Activated CD4-positive, alpha-beta memory T cell treated with anti-CD3 and anti-CD28 coated beads, Interleukin-2, amount 10 ng/mL, durations not matched to agents 7 days and 5 days (primary cell): ENCODE measurements at regions of chr7 and their contacts with region 1.

Region 1: GRCh38 chr7:39623018-39623731 is at the start of gene RALA:
- DNase-seq: peak; percentile 91
- H3K4me3 Mint-ChIP-seq: peak within 1 kb of the TSS; percentile 90
- H3K27ac Mint-ChIP-seq: peak within 1 kb of the TSS; percentile 88
- H3K4me1 Mint-ChIP-seq: peaks cover 34% of the 10 kb centered on the region
- H3K27me3 Mint-ChIP-seq: no peaks in the 10 kb centered on the region
- total RNA-seq, gene RALA: 27.8 to 29.6 TPM

Region 2: DNA sequence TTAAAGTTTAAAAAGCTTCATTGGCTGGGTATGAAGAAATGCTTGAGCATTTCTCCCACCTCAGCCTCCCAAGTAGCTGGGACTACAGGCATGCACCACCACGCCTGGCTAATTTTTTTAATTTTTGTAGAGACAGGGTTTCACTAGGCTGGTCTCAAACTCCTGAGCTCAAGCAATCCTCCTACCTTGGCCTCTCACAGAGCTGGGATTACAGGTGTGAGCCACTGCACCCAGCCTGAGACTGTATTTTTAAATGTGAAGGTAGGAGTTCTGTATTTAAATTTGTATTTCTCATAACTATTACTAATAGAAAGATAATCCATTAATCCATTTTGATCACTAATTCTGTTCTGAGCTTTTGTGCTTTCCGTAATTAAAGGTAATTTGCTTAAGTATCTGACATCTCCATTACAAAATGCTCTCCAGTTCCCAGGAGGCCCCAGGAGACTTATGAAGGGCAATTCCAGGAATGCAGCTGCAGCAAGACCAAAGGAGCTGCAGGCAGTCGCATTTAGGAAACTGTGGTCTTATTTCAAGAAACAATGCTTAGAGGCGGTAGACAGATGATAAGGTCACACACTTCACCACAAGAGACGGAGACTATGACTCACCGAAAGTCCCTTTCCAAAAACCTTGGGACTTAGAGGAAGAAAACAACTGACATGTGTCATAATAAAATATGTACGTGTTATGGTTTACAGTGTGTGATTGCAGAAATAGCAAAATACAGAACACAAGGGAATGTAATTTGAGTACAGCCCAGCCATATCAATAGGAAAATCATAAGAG is 33.7 kb before region 1 on chr7:
- CTCF ChIA-PET with region 1: interaction called, 3 read pairs
- POLR2A ChIA-PET with region 1: interaction called, 19 read pairs
- DNase-seq: peak; percentile 77
- H3K4me3 Mint-ChIP-seq: no peak overlapping the region
- H3K27ac Mint-ChIP-seq: peak overlapping the region; percentile 24
- H3K4me1 Mint-ChIP-seq: peaks cover 45% of the 10 kb centered on the region
- H3K27me3 Mint-ChIP-seq: no peaks in the 10 kb centered on the region

Region 3: GRCh38 chr7:39732837-39733804 is 109.9 kb after region 1 on chr7:
- CTCF ChIA-PET with region 1: interaction called, 3 read pairs
- POLR2A ChIA-PET with region 1: interaction called, 56 read pairs
- DNase-seq: peak; percentile 91
- H3K4me3 Mint-ChIP-seq: peak overlapping the region; percentile 90
- H3K27ac Mint-ChIP-seq: peak overlapping the region; percentile 83
- H3K4me1 Mint-ChIP-seq: peaks cover 42% of the 10 kb centered on the region
- H3K27me3 Mint-ChIP-seq: no peaks in the 10 kb centered on the region